Naive thymus-derived CD8-positive, alpha-beta T cell (primary cell): ENCODE measurements at regions of chr1 and their contacts with region 1.

Region 1: DNA sequence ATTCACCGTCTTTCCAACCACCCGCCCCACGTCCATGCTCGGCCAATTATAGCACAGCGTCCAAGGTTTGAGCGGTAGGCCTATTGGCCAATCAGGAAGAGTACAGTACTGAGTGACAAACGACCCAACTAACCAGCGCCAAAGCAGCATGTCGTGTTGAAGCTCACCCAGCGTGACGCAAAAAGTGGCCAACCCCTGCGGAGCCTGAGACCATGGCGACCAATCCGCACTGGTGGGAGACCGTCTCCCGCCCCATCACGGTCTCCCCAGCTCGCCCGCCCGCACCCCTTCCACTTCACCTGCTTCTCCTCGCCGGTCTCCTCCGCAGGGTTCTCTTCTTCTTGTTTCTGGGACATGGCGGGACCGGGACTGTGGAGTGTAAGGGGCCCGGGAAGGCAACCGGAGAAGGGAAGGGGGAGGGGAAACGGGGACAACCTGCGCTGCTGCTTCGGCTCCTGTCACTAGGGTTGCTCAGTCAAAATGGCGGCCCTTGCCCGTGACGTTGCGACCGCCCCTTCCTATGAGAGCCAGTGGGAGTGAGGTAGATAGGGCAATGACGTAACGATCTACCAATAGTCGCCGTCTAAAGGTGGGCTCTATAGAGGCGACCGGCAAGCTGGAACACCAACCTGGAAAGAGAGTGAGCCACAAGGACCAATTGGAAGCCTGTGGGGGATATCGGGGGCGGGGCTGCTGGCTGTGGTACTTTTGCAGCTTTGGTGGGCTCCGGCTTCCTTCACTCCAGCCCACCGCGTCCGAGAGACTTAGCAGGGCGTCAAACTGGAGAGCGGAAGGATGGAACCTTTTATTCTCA is at the start of gene ENSA:
- DNase-seq: peak; percentile 86 to 99 (median 96)
- ATAC-seq: peak; percentile 86 to 88
- H3K4me3 Mint-ChIP-seq: no peak within 1 kb of the TSS
- H3K27ac Mint-ChIP-seq: no peak within 1 kb of the TSS
- H3K4me1 Mint-ChIP-seq: peaks cover 12 to 20% (median 18%) of the 10 kb centered on the region in 4 donors
- H3K27me3 Mint-ChIP-seq: no peaks in the 10 kb centered on the region
- polyA plus RNA-seq, gene ENSA: 55.2 to 64.4 (median 63.7) TPM

Region 2: DNA sequence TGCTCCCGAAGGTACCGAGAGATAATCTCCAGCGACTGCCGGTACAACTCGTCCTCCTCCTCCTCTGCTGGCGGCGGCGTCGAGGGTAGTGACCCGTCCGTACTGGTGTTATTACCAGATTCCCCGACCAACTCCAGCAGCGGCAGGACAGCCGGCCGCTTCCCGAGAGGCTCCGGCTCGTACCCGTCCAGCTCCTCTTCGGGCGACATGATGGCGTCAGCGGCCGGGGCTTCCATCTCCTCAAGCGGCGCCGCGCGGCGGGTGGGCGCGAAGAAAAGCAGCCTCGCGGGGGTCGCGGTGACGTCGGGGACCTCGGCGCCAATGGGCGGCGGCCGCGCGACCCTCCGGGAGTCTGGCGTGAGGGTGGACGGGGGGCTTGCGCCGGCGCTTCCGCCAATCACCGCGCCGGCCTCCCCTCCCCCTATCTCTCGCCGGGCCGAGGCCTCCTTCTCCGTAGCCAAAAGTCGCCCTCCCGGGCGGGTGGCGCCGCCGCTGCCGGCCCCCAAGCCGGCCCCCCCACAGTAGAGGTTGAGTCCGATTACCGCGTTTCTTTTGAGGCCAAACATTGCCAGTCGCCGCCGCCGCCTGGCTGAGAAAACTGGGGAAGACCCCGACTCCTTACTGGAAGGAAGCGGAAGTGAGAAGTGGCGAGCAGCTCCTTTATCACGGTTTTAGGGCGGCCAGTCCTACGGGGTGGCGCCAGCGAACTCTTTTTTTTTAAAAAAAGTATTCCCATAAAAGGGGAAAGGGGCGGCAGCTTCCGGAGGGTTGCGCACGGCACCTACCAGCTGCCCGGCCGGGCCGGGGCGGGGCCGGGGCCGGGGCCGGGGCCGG is 50.1 kb before region 1 on chr1 and contains the start of gene MCL1:
- POLR2A ChIA-PET with region 1: interaction called, 71 read pairs
- DNase-seq: peak; percentile 73 to 94 (median 86)
- ATAC-seq: peak; percentile 71 to 75
- H3K4me3 Mint-ChIP-seq: peak within 1 kb of the TSS; percentile 94 to 99 (median 97)
- H3K27ac Mint-ChIP-seq: peak within 1 kb of the TSS; percentile 95 to 99 (median 98)
- H3K4me1 Mint-ChIP-seq: peaks cover 23 to 42% (median 35%) of the 10 kb centered on the region in 4 donors
- H3K27me3 Mint-ChIP-seq: no peaks in the 10 kb centered on the region
- polyA plus RNA-seq, gene MCL1: 125 to 170 (median 146) TPM